IMR-90 (cell line): ENCODE measurements at regions of chr20 and their contacts with region 1.

Region 1: GRCh38 chr20:34312544-34313217 is 9.5 kb upstream of the AHCY start:
- DNase-seq: peak; percentile 81
- ATAC-seq: peak; percentile 97
- H3K4me3 ChIP-seq: peak overlapping the region; percentile 17; the same call in 1 of the 2 replicates
- H3K27ac ChIP-seq: no peak overlapping the region
- H3K4me1 ChIP-seq: peaks cover 4% of the 10 kb centered on the region
- H3K27me3 ChIP-seq: no peaks in the 10 kb centered on the region
- CTCF ChIP-seq: peak; percentile 100; the same call in 1 of the 2 replicates
- POLR2A ChIP-seq: peak; percentile 63; the same call in 1 of the 2 replicates
- RAD21 ChIP-seq: peak; percentile 100

Region 2: GRCh38 chr20:34190679-34191090 is 122.0 kb before region 1 on chr20:
- CTCF ChIA-PET with region 1: interaction called, 10 read pairs
- POLR2A ChIA-PET with region 1: no interaction called
- dilution Hi-C with region 1: no loop called
- in situ Hi-C with region 1: no loop called
- intact Hi-C with region 1: no loop called
- DNase-seq: peak; percentile 87
- ATAC-seq: peak; percentile 100
- H3K4me3 ChIP-seq: no peak overlapping the region
- H3K27ac ChIP-seq: no peak overlapping the region
- H3K4me1 ChIP-seq: no peaks in the 10 kb centered on the region
- H3K27me3 ChIP-seq: peaks cover 54% of the 10 kb centered on the region
- CTCF ChIP-seq: peak; percentile 89
- POLR2A ChIP-seq: 0 out of 2 replicates have a peak, but pooled peaks have one; percentile 33
- RAD21 ChIP-seq: peak; percentile 95

Region 3: DNA sequence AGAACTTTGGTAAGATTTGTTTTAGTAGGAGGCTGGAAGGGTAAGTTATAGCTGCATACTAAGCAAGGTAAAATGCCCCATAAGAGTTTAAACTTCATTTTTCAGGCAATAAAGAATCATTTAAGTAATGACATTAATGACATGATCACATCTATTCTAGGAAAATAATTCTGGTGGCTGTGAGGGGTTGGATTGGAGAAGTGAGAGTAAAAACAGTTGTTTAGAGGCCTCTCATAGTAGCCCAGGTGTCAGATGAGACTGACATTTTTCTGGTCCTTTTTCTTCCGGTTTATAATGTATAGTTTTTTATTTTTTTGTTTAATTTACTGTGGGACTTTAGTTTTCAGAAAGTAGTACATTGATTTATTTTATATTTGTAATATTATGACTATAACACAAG is 91.2 kb after region 1 on chr20:
- CTCF ChIA-PET with region 1: interaction called, 6 read pairs
- POLR2A ChIA-PET with region 1: no interaction called
- dilution Hi-C with region 1: no loop called
- in situ Hi-C with region 1: no loop called
- intact Hi-C with region 1: loop called (anchors 5 kb)
- DNase-seq: no peak
- ATAC-seq: no peak
- H3K4me3 ChIP-seq: no peak overlapping the region
- H3K27ac ChIP-seq: no peak overlapping the region
- H3K4me1 ChIP-seq: peaks cover 11% of the 10 kb centered on the region
- H3K27me3 ChIP-seq: no peaks in the 10 kb centered on the region
- CTCF ChIP-seq: no peak
- POLR2A ChIP-seq: no peak
- RAD21 ChIP-seq: no peak

Region 4: DNA sequence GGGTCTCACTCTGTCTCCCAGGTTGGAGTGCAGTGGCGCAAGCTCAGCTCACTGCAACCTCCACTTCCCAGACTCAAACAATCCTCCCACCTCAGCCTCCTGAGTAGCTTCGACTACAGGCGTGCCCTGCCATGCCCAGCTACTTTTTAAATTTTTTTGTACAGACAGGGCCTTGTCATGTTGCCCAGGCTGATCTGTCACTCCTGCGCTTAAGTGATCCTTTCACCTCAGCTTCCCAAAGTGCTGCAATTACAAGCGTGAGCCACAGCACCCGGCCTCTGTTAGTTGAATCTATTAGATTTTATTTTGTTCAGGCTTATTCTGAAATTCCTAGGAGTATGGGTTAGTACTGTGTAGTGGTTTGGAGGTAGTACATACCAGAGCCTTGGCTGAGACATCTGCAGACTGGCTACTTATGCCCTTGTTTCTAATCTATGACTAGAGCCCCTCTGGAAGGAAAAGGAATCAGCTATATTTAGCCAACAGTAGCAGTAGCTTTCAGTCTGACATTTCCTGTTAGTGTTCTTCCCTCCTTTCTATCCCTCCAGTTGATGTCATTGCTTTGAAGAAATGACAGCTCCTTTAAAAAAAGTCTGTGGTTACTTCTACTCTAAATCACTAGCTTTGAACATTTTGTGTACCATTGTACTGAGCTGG is 124.8 kb after region 1 on chr20:
- CTCF ChIA-PET with region 1: interaction called, 11 read pairs
- POLR2A ChIA-PET with region 1: no interaction called
- dilution Hi-C with region 1: no loop called
- in situ Hi-C with region 1: no loop called
- intact Hi-C with region 1: no loop called
- DNase-seq: peak; percentile 74
- ATAC-seq: peak; percentile 88
- H3K4me3 ChIP-seq: no peak overlapping the region
- H3K27ac ChIP-seq: no peak overlapping the region
- H3K4me1 ChIP-seq: peaks cover 3% of the 10 kb centered on the region; the same call in 1 of the 2 replicates
- H3K27me3 ChIP-seq: no peaks in the 10 kb centered on the region
- CTCF ChIP-seq: no peak
- POLR2A ChIP-seq: no peak
- RAD21 ChIP-seq: no peak

Region 5: DNA sequence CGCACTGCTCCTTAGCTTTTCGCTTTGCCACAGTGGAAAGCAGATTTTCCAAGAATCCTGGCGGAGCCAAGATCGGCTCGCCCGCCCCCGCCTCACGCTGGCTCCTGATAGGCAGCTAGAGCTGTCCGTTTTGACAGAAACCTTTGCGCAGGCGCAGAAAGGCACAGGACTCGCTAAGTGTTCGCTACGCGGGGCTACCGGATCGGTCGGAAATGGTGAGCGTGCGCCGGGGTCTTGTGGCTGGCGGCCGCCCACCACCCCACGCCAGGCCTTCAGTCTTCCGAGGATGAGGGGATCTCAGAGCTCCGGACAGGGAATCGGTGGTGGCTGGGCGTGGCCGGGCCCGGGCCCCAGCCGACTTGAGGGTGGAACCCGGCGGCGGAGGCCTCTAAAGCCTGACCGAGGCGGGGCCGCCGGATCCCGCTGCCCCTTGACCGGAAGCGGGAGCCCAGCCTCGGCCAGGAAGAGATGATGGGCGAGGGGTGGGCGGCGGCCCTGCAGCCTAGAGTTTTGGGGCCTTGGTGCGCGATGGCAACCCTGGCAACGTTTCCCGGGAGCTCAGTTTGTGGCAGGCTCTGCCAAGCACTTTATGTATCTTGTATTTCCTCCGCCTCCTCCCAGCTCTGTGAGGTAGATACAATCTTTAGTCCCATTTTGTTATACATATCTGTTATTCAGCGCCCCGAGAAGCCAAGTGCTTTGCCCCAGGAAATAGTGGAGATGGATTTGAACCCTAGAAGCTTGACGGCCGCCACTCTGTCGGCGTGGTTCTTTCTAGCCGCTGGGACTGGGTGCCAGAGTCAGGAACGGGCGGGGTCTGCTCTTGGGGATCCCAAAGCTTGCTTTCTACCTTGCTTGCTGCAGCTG is 203.8 kb after region 1 on chr20 and contains the start of gene DYNLRB1:
- CTCF ChIA-PET with region 1: interaction called, 24 read pairs
- POLR2A ChIA-PET with region 1: no interaction called
- dilution Hi-C with region 1: no loop called
- in situ Hi-C with region 1: loop called (anchors 5 kb)
- intact Hi-C with region 1: loop called (anchors 2 kb)
- DNase-seq: peak; percentile 96
- ATAC-seq: peak; percentile 89
- H3K4me3 ChIP-seq: peak within 1 kb of the TSS; percentile 89
- H3K27ac ChIP-seq: peak within 1 kb of the TSS; percentile 95
- H3K4me1 ChIP-seq: peaks cover 7% of the 10 kb centered on the region; the same call in 1 of the 2 replicates
- H3K27me3 ChIP-seq: no peaks in the 10 kb centered on the region
- CTCF ChIP-seq: no peak
- POLR2A ChIP-seq: peak; percentile 90
- RAD21 ChIP-seq: no peak
- total RNA-seq, gene DYNLRB1: 78.0 and 82.4 TPM in 2 replicates

Region 6: DNA sequence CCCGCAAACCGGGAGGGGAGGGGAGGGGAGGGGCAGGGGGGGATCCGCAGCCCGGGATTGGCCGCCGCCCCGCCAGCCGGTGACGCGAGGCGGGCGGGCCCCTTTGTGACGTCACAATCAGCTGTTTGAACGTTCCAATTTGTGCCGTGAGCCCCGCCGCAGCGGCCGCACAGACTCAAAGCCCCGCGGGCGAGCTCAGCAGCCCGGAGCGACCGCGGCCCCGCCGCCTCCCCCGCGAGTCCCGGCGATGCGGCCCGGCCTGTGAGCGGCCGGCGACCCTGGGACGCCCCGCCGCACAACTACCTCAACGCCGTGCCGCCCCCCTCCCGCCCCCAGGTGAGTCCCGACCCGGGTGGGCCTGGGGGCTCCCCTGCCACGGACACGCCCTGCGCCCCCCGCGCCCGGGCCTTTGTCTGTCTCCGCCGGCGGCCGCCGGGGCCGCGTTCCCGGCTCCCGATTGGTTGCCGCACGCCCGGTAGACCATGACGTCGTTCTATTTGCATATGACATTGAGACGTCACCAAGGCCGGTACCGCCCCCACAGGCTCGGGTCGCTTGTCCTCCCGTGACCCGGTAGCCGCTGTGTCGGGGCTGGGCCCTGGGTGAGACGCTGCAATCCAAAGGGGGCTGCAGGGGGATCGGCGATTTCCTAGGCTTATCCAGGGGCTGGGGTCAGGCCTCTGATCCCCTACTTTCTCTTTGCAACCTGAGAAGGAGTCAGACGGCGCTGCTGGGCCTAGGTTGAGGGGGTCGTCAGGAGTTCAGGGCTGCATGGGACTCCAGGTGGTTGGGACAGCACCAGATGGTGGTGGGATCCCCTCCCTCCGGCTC is 391.7 kb after region 1 on chr20 and contains the start of gene TP53INP2:
- CTCF ChIA-PET with region 1: no interaction called
- POLR2A ChIA-PET with region 1: no interaction called
- dilution Hi-C with region 1: no loop called
- in situ Hi-C with region 1: no loop called
- intact Hi-C with region 1: loop called (anchors 5 kb)
- DNase-seq: peak; percentile 91
- ATAC-seq: peak; percentile 76
- H3K4me3 ChIP-seq: peak within 1 kb of the TSS; percentile 69
- H3K27ac ChIP-seq: peak within 1 kb of the TSS; percentile 56
- H3K4me1 ChIP-seq: peaks cover 8% of the 10 kb centered on the region
- H3K27me3 ChIP-seq: no peaks in the 10 kb centered on the region
- CTCF ChIP-seq: no peak
- POLR2A ChIP-seq: peak; percentile 96
- RAD21 ChIP-seq: no peak
- total RNA-seq, gene TP53INP2: 1.1 and 1.3 TPM in 2 replicates